ENCODE measurements at regions of chr12 and their contacts with region 1.

Region 1: GRCh38 chr12:8108808-8109398 is 14.5 kb upstream of the CLEC4A start:
- DNase-seq: peak; percentile 42 to 81
- ATAC-seq: peak; percentile 84 to 89; a peak in 5 of 6 replicates
- H3K4me3 ChIP-seq: no peak overlapping the region
- H3K27ac ChIP-seq: peak overlapping the region; percentile 49 to 64; a peak in 4 of 6 replicates
- H3K4me1 ChIP-seq: no peaks in the 10 kb centered on the region
- CTCF ChIP-seq: peak; percentile 98
- EP300 ChIP-seq: no peak
- POLR2A ChIP-seq: no peak
- RAD21 ChIP-seq: peak; percentile 96 to 98

Region 2: GRCh38 chr12:7899755-7900154 is 209.1 kb before region 1 on chr12:
- CTCF ChIA-PET with region 1: no interaction called
- POLR2A ChIA-PET with region 1: no interaction called
- DNase-seq: no peak
- ATAC-seq: no peak
- H3K4me3 ChIP-seq: no peak overlapping the region
- H3K27ac ChIP-seq: peak overlapping the region in 1 of 2 experiments; percentile 15; a peak in 1 of 6 replicates
- H3K4me1 ChIP-seq: peaks cover 4% of the 10 kb centered on the region
- CTCF ChIP-seq: no peak
- EP300 ChIP-seq: no peak
- POLR2A ChIP-seq: no peak
- RAD21 ChIP-seq: no peak

Region 3: GRCh38 chr12:8096281-8096915 is 12.5 kb before region 1 on chr12:
- CTCF ChIA-PET with region 1: interaction called, 14 read pairs
- POLR2A ChIA-PET with region 1: no interaction called
- DNase-seq: no peak
- ATAC-seq: no peak
- H3K4me3 ChIP-seq: no peak overlapping the region
- H3K27ac ChIP-seq: no peak overlapping the region
- H3K4me1 ChIP-seq: no peaks in the 10 kb centered on the region
- CTCF ChIP-seq: no peak
- EP300 ChIP-seq: no peak
- POLR2A ChIP-seq: no peak
- RAD21 ChIP-seq: no peak

Region 4: GRCh38 chr12:8120072-8120713 is 11.3 kb after region 1 on chr12:
- CTCF ChIA-PET with region 1: interaction called, 35 read pairs
- POLR2A ChIA-PET with region 1: no interaction called
- DNase-seq: no peak
- ATAC-seq: no peak
- H3K4me3 ChIP-seq: no peak overlapping the region
- H3K27ac ChIP-seq: no peak overlapping the region
- H3K4me1 ChIP-seq: no peaks in the 10 kb centered on the region
- CTCF ChIP-seq: no peak
- EP300 ChIP-seq: no peak
- POLR2A ChIP-seq: no peak
- RAD21 ChIP-seq: no peak

Region 5: DNA sequence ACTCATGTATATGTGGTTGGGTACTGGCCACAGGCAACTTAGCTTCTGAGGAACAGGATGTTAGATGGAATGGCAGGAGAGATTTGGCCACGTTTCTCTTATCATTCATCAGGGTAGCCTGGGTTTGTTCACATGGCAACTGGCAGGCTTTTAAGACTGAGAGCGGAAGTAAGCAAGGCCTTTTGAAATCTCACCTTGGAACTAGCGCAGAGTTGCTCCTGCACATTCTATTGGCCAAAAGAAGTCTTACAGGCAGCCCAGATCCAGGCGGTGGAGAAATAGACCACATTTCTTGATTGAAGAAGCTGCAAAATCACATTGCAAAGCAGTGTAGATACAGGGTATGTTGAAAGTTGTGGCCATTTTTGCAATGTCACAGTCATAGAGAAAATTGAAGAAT is 18.2 kb after region 1 on chr12:
- CTCF ChIA-PET with region 1: interaction called, 11 read pairs
- POLR2A ChIA-PET with region 1: no interaction called
- DNase-seq: no peak
- ATAC-seq: no peak
- H3K4me3 ChIP-seq: no peak overlapping the region
- H3K27ac ChIP-seq: no peak overlapping the region
- H3K4me1 ChIP-seq: no peaks in the 10 kb centered on the region
- CTCF ChIP-seq: no peak
- EP300 ChIP-seq: no peak
- POLR2A ChIP-seq: no peak
- RAD21 ChIP-seq: no peak

Region 6: DNA sequence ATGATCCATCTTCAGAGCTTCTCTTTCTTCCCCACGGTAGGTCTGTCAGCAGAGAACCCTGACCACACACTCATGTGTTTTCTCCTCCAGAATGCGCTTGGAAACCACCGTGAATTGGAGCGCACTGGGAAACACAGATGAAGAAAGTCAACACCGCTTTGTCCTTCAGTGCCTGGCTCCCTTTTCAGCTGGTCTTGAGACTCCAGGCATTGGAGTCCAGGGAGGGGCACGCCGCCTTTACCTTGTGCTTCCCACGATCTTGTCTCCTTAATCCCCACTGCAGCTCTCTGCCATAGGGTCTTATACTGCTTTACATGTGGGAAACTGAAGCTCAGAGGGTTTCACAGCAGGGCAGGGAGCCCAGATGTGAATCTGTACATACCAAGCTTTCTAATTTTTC is 117.5 kb after region 1 on chr12:
- CTCF ChIA-PET with region 1: interaction called, 36 read pairs
- POLR2A ChIA-PET with region 1: no interaction called
- DNase-seq: no peak
- ATAC-seq: no peak
- H3K4me3 ChIP-seq: no peak overlapping the region
- H3K27ac ChIP-seq: no peak overlapping the region
- H3K4me1 ChIP-seq: no peaks in the 10 kb centered on the region
- CTCF ChIP-seq: no peak
- EP300 ChIP-seq: no peak
- POLR2A ChIP-seq: no peak
- RAD21 ChIP-seq: no peak

Region 7: GRCh38 chr12:8969861-8970412 is 861.0 kb after region 1 on chr12:
- CTCF ChIA-PET with region 1: no interaction called
- POLR2A ChIA-PET with region 1: no interaction called
- DNase-seq: peak in 1 of 2 experiments; percentile 11
- ATAC-seq: no peak
- H3K4me3 ChIP-seq: no peak overlapping the region
- H3K27ac ChIP-seq: no peak overlapping the region; a peak in 1 of 6 replicates
- H3K4me1 ChIP-seq: peaks cover 9% of the 10 kb centered on the region; the same call in 2 of the 3 replicates
- CTCF ChIP-seq: no peak
- EP300 ChIP-seq: no peak
- POLR2A ChIP-seq: no peak
- RAD21 ChIP-seq: no peak